Prostate gland (tissue), 2 donors: ENCODE measurements at regions of chr17 and their contacts with region 1.

Region 1: DNA sequence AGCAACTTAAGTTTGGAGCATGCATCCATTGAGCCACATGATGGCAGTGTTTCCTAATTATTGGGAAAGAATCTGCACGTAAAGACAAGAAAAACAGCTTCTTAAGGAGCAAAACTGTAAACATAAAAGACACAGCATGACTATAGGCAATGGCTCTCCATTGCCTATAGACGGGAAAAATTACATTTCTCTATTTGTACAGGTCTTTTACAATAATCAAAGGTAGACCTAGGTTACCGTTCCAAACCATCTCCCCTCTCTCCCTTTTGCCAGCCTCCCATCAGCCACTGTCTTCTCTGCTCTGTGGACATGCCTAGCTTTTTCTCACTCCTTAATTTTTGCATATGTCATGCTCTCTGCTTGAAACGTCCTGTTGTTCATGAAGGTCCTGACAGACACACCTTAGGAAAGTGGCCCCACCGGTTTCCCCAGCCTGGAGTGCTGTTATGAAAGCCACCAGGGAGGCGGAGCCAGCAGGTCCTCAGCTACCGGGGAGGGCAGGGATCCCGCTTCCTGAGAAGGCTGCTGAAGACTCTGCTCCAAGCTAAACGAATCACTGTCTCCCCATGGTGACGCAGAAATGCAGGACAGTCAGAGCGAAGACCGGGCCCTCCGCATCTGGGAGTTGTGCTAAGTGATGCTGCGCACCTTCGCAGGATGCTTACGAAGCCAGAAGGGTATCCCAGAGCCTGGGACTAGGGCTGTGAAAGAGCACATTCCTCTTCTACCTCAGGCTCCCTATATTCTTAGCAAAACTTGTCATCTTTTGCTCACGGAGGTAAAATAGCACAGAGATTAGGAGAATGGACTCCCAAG is 2.2 kb upstream of the SLC16A11 start:
- DNase-seq: peak; percentile 92
- H3K4me3 ChIP-seq: peak overlapping the region; percentile 11 to 33
- H3K27ac ChIP-seq: peak overlapping the region; percentile 89
- H3K4me1 ChIP-seq: peaks cover 25% of the 10 kb centered on the region
- H3K27me3 ChIP-seq: no peaks in the 10 kb centered on the region
- CTCF ChIP-seq: peak; percentile 59 to 97 (median 92)
- POLR2A ChIP-seq: no peak

Region 2: DNA sequence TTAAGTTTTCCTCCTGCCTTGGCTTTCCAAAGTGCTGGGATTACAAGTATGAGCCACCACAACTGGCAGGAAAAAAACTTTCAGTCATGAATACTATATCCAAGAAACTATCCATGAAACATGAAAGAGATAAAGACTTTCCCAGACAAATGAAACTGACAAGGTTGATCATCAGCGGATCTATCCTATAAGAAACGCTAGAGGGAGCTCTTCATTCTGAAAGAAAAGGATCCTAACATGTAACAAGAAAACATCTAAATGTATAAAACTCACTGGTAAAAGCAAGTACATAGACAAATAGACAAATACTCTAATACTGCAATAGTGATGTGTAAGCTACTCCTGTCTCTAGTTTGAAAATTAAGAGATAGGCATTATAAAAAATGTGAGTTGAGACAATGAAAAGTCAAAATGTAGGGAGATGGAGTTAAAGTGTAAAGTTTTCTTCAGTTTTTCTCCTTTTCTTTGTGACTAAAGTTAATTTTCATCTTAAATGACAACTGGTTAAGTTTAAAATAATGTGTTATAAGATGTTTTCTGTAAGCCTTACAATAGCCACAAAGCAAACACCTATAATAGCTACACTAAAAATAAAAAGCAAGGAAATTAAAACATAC is 135.0 kb before region 1 on chr17:
- intact Hi-C with region 1: no loop called
- DNase-seq: no peak
- H3K4me3 ChIP-seq: no peak overlapping the region
- H3K27ac ChIP-seq: no peak overlapping the region
- H3K4me1 ChIP-seq: no peaks in the 10 kb centered on the region
- H3K27me3 ChIP-seq: no peaks in the 10 kb centered on the region
- CTCF ChIP-seq: peak in 3 of 4 experiments; percentile 18 to 63 (median 33)
- POLR2A ChIP-seq: no peak

Region 3: DNA sequence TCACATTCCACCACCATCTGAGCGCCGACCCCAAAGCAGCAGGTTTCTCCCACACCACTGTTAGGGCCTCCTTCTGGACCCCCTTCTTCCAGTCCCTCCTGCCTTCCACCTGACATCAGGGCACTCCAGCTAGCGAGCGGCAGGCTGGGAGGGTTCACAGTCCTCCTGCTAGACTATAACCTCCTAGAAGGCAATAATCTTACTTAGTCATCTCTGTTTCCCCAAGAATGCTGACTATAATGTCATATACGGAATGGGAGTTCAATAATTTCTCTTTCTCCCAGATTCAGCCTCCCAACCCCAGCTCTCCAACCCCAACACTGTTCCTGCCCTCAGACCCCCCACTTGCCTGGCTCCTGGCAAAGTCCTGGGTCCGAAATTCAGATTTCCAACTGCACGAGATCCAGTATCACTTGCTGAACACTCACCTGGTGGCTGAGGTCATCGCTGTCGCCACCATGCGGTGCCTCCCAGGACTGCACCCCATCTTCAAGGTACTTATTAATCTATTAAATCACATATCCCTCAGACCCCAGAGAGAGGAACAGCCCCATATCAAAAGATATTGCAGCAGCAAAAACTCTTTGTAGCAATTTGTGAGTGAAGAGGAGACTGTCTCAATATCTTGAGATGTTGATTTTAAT is 44.7 kb before region 1 on chr17:
- intact Hi-C with region 1: no loop called
- DNase-seq: no peak
- H3K4me3 ChIP-seq: no peak overlapping the region
- H3K27ac ChIP-seq: no peak overlapping the region
- H3K4me1 ChIP-seq: no peaks in the 10 kb centered on the region
- H3K27me3 ChIP-seq: no peaks in the 10 kb centered on the region
- CTCF ChIP-seq: peak in 1 of 4 experiments; percentile 27
- POLR2A ChIP-seq: no peak

Region 4: DNA sequence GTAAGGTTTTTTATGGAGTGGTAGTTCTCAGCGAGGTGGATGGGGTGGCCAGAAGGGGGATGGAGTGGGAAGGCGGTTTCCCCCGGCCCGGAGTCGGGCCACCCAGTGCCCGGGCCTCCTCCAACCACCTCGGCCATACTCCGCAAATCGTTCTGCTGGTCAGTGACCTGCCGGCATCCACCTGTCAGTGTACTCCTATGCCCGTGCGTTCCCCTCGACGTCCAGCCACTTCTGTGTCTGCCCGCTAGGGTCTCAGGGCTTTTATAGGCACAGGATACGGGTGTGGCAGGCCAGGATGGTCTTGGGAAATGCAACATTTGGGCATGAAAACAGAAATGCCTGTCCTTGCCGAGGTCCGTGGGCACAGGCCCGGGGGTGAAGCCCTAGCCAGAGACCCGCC is 87.8 kb after region 1 on chr17:
- intact Hi-C with region 1: loop called (anchors 2 kb)
- DNase-seq: no peak
- H3K4me3 ChIP-seq: no peak overlapping the region
- H3K27ac ChIP-seq: no peak overlapping the region
- H3K4me1 ChIP-seq: no peaks in the 10 kb centered on the region
- H3K27me3 ChIP-seq: no peaks in the 10 kb centered on the region
- CTCF ChIP-seq: no peak
- POLR2A ChIP-seq: no peak

Region 5: DNA sequence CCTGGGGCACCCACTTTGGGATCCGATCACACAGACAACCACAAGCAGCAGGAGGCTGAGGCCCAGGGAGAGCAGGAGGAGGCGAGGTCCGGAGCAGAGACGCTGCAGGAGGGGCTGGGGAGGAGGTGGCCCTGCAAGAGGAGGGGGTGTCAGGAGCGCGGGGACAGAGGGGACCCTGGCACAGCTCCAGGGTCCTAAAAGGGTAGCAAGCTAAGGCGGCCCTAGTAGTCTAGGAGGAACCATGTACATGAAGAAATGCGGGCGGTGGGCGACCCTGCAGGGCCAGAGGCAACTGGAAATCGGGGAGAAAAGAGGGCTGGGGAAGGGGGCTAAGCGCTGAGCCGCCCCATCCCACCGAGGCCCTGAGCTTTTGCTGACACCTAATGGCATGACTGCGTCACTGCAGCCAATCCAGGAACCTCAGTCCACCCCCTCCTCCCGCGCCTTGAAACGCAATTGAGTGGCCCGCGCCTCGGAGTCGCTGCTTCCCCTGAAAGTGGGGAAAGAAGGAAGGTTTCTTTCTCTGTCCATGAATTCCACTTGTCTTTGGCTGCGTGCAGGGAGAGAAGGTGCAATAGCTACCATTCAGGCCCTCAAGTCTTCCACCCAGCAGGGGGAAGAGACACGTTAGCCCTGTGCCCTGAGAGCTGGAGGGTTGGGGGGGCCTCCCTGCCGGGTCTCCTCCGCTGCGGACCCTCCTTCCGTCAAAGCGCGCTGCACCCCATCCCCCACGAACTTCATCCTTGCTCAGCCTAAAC is 131.3 kb after region 1 on chr17:
- intact Hi-C with region 1: loop called (anchors 5 kb)
- DNase-seq: peak; percentile 54
- H3K4me3 ChIP-seq: peak overlapping the region; percentile 12 to 19
- H3K27ac ChIP-seq: no peak overlapping the region
- H3K4me1 ChIP-seq: peaks cover 6% of the 10 kb centered on the region
- H3K27me3 ChIP-seq: no peaks in the 10 kb centered on the region
- CTCF ChIP-seq: peak; percentile 60 to 85 (median 76)
- POLR2A ChIP-seq: no peak